Ovary (tissue), 10 donors: ENCODE measurements at regions of chr6 and their contacts with region 1.

Region 1: GRCh38 chr6:149925974-149926777 is 3.3 kb upstream of the RAET1G start:
- DNase-seq: peak; percentile 87 to 93 (median 92)
- H3K4me3 ChIP-seq: peak overlapping the region; percentile 44
- H3K27ac ChIP-seq: peak overlapping the region in 1 of 2 donors; percentile 2
- H3K4me1 ChIP-seq: peaks cover 7% of the 10 kb centered on the region
- H3K27me3 ChIP-seq: no peaks in the 10 kb centered on the region
- CTCF ChIP-seq: peak; percentile 67 to 95 (median 95)
- EP300 ChIP-seq: no peak
- POLR2A ChIP-seq: no peak

Region 2: GRCh38 chr6:149545754-149546528 is 380.2 kb before region 1 on chr6 and contains the start of gene PPIL4:
- intact Hi-C with region 1: loop called in 1 of 4 experiments (anchors 10 kb)
- DNase-seq: peak; percentile 95 to 99 (median 97)
- H3K4me3 ChIP-seq: peak within 1 kb of the TSS; percentile 97
- H3K27ac ChIP-seq: peak within 1 kb of the TSS; percentile 48 to 93
- H3K4me1 ChIP-seq: peaks cover 9% of the 10 kb centered on the region
- H3K27me3 ChIP-seq: no peaks in the 10 kb centered on the region
- CTCF ChIP-seq: peak; percentile 75 to 82 (median 76)
- EP300 ChIP-seq: peak; percentile 87
- POLR2A ChIP-seq: peak; percentile 94
- total RNA-seq, gene PPIL4: 35.1 to 50.6 (median 39.5) TPM

Region 3: DNA sequence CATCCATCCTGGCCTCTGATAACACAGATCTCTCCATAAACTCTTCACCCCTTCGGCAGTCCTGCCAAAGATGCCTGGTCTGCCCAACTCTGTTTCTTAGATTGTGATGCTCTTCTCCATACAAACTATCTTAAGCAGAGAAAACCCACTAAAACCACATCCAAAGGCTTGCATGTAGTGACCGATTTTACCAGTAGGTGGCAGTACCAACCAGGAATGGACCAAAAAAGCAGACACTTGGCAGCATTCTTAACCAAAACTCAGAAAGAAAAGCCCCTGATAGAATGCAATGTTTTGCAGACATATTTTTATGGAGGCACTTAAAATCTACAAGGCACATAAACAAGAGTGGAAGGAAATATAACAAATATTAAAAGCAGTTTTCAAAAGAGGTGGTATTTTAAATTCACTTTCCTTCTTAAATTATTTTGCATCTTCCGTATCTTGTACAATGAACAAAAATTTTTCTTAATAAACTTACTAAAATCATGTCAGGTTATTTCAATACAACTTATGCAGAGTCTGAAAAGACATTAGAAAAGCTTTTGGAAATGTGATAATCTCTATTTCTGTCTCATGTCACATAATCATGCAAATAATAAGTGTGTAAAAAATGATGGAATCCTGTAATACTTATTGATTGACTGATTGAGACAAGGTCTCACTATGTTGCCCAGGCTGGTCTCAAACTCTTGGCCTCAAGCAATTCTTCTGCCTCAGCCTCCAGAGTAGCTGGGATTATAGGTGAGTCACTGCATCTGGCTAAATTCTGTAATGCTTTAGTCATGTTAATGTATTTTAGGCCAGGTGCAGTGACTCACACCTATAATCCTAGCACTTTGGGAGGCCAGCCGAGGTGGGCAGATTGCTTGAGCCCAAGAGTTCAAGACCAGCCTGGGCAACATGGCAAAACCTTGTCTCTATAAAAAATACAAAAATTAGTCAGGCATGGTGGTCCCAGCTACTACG is 91.4 kb before region 1 on chr6:
- intact Hi-C with region 1: loop called (anchors 2 to 5 kb)
- DNase-seq: peak in 4 of 5 donors; percentile 53 to 75 (median 64)
- H3K4me3 ChIP-seq: no peak overlapping the region
- H3K27ac ChIP-seq: no peak overlapping the region
- H3K4me1 ChIP-seq: peaks cover 1% of the 10 kb centered on the region
- H3K27me3 ChIP-seq: no peaks in the 10 kb centered on the region
- CTCF ChIP-seq: peak; percentile 80 to 91 (median 84)
- EP300 ChIP-seq: no peak
- POLR2A ChIP-seq: no peak

Region 4: DNA sequence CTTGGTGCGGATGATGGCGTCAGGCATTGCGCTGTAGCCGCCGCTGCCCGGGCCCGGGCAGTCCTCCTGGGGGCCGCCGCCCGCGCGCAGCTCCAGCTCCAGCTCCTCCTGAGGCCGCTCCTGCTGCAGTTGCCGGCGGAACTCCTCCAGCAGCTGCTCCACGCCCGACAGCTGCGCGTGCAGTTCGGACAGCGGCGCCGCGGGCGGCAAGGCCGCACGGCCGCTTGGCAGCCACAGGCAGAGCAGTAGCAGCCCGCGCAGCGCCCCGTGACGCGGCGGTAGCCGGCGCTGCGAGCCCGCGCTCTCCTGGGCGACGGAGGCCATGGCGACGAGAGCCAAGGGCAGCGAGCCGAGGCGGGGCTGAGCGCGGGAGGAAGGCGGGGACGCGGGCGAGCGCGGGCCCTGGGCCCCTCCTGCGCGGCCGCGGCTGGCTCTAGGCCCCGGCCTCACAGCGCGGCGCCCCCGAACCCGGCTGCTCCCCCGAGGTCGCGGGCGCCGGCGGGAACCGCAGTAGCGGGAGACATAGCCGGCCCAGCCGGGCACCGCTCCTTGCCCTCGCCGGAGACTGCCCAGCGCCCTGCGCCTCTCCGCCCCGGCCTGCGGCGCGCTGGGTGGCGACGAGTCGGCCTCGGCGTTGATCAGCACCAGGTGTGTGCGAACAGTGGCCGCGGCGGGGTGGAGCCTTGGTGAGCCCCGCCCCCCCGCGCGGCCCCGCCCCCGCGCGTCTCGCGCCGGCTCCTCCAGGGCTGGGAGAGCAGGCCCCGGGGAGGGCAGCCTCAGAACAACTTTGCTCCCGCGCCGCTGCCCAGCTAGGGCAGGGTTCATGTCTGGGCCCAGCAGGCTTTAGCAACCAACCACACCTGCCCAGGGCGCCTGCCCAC is 62.2 kb before region 1 on chr6 and contains the start of gene LRP11:
- intact Hi-C with region 1: loop called in 1 of 4 experiments (anchors 10 kb)
- DNase-seq: peak; percentile 88 to 92 (median 90)
- H3K4me3 ChIP-seq: peak within 1 kb of the TSS; percentile 56
- H3K27ac ChIP-seq: peak within 1 kb of the TSS; percentile 82
- H3K4me1 ChIP-seq: peaks cover 6% of the 10 kb centered on the region
- H3K27me3 ChIP-seq: no peaks in the 10 kb centered on the region
- CTCF ChIP-seq: no peak
- EP300 ChIP-seq: no peak
- POLR2A ChIP-seq: peak; percentile 68
- total RNA-seq, gene LRP11: 26.2 to 48.2 (median 37.5) TPM

Region 5: GRCh38 chr6:149974825-149975224 is 48.6 kb after region 1 on chr6:
- intact Hi-C with region 1: no loop called
- DNase-seq: no peak
- H3K4me3 ChIP-seq: no peak overlapping the region
- H3K27ac ChIP-seq: no peak overlapping the region
- H3K4me1 ChIP-seq: no peaks in the 10 kb centered on the region
- H3K27me3 ChIP-seq: no peaks in the 10 kb centered on the region
- CTCF ChIP-seq: no peak
- EP300 ChIP-seq: no peak
- POLR2A ChIP-seq: no peak

Region 6: DNA sequence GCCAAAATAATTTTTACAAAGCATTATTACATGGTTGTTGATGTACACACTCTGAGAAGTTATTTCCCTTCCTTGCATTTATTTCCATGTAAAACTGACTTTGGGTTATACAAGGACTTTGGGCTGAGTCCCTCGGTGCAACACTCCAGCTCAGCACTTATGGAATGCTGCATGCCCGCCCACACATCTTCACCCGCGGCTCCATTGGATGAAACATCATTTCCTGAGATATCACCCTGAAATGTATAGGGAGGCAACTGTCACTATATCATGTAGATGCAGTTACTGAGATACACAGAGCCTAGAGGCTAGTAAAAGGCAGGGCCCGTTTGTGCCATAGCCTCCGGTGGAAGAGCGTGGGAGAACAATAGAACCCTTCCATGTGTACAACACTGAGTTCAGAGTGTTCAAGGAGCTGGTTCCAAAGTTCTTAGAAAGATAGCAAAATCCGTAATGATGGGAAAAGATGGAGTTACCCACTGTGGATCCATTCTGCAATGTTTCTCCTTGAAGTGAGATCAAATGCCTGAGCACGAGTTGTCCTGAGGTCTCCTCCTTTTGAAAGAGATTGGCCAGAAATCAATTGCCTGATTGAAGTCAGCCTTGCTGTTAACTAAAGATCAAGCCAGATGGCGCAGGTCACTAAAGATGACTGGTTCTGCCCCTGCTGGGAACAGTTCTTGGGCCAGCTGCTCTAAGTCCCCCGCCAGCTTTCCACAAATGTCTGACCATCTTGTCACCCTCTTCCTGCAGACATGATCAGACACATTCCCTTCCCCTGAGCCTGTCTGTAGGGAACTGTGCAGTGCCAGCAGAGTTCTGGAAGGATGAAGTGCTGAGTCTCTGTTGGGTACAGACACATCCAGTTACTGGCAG is 341.7 kb after region 1 on chr6:
- intact Hi-C with region 1: no loop called
- DNase-seq: no peak
- H3K4me3 ChIP-seq: no peak overlapping the region
- H3K27ac ChIP-seq: no peak overlapping the region
- H3K4me1 ChIP-seq: no peaks in the 10 kb centered on the region
- H3K27me3 ChIP-seq: no peaks in the 10 kb centered on the region
- CTCF ChIP-seq: no peak
- EP300 ChIP-seq: no peak
- POLR2A ChIP-seq: no peak

Region 7: DNA sequence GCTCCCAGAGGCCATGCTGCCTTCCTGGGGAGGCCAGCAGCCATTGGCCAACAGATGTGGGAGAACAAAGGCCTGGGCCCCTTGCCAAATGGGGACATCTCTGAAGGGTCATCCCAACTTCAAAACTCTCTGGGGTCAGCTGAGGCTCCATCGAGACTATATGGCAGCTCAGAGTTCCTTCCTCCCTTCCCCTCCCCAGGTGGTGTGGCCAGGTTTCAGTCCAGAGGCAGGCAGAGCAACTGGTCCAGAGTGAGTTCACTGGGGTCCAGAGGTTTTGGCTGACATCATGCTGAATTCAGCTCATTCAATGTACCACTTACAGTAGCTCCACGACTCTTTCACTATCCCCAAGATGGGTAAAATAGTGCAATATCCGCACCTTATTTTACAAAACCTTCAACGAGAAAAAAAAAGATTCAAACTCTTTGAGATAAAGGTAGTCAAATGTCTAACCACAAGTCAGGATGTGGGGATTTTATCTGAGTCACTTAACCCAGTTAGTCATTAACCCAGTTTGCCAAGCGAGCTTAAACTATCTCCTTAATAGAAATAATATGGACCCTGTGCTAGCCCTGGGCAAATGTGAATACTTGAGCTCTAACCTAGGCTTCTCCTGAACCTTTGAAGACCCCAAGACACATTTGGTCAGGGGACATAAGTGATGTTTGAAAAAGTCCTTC is 565.1 kb after region 1 on chr6:
- intact Hi-C with region 1: no loop called
- DNase-seq: no peak
- H3K4me3 ChIP-seq: no peak overlapping the region
- H3K27ac ChIP-seq: no peak overlapping the region
- H3K4me1 ChIP-seq: no peaks in the 10 kb centered on the region
- H3K27me3 ChIP-seq: no peaks in the 10 kb centered on the region
- CTCF ChIP-seq: no peak
- EP300 ChIP-seq: no peak
- POLR2A ChIP-seq: no peak